Endothelial cell of umbilical vein (primary cell): ENCODE measurements at regions of chr10 and their contacts with region 1.

Region 1: DNA sequence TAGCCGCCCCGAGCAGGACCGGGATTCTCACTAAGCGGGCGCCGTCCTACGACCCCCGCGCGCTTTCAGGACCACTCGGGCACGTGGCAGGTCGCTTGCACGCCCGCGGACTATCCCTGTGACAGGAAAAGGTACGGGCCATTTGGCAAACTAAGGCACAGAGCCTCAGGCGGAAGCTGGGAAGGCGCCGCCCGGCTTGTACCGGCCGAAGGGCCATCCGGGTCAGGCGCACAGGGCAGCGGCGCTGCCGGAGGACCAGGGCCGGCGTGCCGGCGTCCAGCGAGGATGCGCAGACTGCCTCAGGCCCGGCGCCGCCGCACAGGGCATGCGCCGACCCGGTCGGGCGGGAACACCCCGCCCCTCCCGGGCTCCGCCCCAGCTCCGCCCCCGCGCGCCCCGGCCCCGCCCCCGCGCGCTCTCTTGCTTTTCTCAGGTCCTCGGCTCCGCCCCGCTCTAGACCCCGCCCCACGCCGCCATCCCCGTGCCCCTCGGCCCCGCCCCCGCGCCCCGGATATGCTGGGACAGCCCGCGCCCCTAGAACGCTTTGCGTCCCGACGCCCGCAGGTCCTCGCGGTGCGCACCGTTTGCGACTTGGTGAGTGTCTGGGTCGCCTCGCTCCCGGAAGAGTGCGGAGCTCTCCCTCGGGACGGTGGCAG is at the start of gene MGMT:
- DNase-seq: peak; percentile 50
- H3K4me3 ChIP-seq: peak within 1 kb of the TSS; percentile 34 to 64 (median 63)
- H3K27ac ChIP-seq: peak within 1 kb of the TSS; percentile 25
- H3K4me1 ChIP-seq: peaks cover 10% of the 10 kb centered on the region
- H3K27me3 ChIP-seq: no peaks in the 10 kb centered on the region
- CTCF ChIP-seq: no peak
- POLR2A ChIP-seq: peak; percentile 61
- total RNA-seq, gene MGMT: 11.1 and 15.0 TPM in 2 replicates

Region 2: GRCh38 chr10:129305046-129305445 is 161.8 kb before region 1 on chr10:
- CTCF ChIA-PET with region 1: no interaction called
- POLR2A ChIA-PET with region 1: no interaction called
- dilution Hi-C with region 1: no loop called
- intact Hi-C with region 1: loop called (anchors 5 kb)
- DNase-seq: peak; percentile 73
- H3K4me3 ChIP-seq: peak overlapping the region in 1 of 3 experiments; percentile 7
- H3K27ac ChIP-seq: peak overlapping the region; percentile 61
- H3K4me1 ChIP-seq: peaks cover 14% of the 10 kb centered on the region
- H3K27me3 ChIP-seq: no peaks in the 10 kb centered on the region
- CTCF ChIP-seq: no peak
- POLR2A ChIP-seq: no peak

Region 3: GRCh38 chr10:129345763-129346162 is 121.1 kb before region 1 on chr10:
- CTCF ChIA-PET with region 1: no interaction called
- POLR2A ChIA-PET with region 1: no interaction called
- dilution Hi-C with region 1: no loop called
- intact Hi-C with region 1: no loop called
- DNase-seq: no peak
- H3K4me3 ChIP-seq: no peak overlapping the region
- H3K27ac ChIP-seq: no peak overlapping the region
- H3K4me1 ChIP-seq: no peaks in the 10 kb centered on the region
- H3K27me3 ChIP-seq: no peaks in the 10 kb centered on the region
- CTCF ChIP-seq: no peak
- POLR2A ChIP-seq: no peak

Region 4: DNA sequence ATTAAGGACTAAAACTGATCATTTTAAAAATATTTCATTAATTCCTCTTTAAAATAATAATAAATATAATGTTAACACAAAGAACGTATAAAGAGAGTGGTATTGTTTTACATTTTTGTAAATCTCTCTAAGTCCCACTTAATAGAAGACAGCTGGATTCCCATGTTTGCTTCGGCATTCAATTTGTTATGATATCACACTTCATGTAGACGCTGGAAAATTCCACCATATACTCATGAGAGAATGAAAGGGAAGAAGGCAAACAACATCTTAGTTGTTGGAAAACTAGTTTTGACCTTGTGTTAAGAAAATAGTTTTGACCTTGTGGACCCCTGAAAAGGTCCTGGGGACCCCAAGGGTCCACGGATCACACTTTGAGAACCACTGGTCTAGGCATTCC is 85.1 kb before region 1 on chr10:
- CTCF ChIA-PET with region 1: no interaction called
- POLR2A ChIA-PET with region 1: no interaction called
- dilution Hi-C with region 1: no loop called
- intact Hi-C with region 1: no loop called
- DNase-seq: no peak
- H3K4me3 ChIP-seq: no peak overlapping the region
- H3K27ac ChIP-seq: no peak overlapping the region
- H3K4me1 ChIP-seq: no peaks in the 10 kb centered on the region
- H3K27me3 ChIP-seq: no peaks in the 10 kb centered on the region
- CTCF ChIP-seq: no peak
- POLR2A ChIP-seq: no peak